ENCODE measurements at regions of chr16 and their contacts with region 1.

Region 1: GRCh38 chr16:87765776-87766484 is at the start of gene KLHDC4:
- DNase-seq: peak in 1 of 2 donors; percentile 89
- H3K4me3 ChIP-seq: peak within 1 kb of the TSS; percentile 78 to 90
- H3K27ac ChIP-seq: peak within 1 kb of the TSS; percentile 82
- H3K4me1 ChIP-seq: peaks cover 34% of the 10 kb centered on the region
- H3K27me3 ChIP-seq: no peaks in the 10 kb centered on the region
- CTCF ChIP-seq: no peak
- POLR2A ChIP-seq: peak in 1 of 2 donors; percentile 44
- total RNA-seq, gene KLHDC4: 62.9 TPM

Region 2: GRCh38 chr16:87581833-87582203 is 184.1 kb before region 1 on chr16:
- intact Hi-C with region 1: loop called (anchors 10 kb)
- DNase-seq: peak in 1 of 2 donors; percentile 94
- H3K4me3 ChIP-seq: peak overlapping the region; percentile 12 to 25
- H3K27ac ChIP-seq: peak overlapping the region; percentile 96
- H3K4me1 ChIP-seq: peaks cover 29% of the 10 kb centered on the region
- H3K27me3 ChIP-seq: no peaks in the 10 kb centered on the region
- CTCF ChIP-seq: no peak
- POLR2A ChIP-seq: no peak